ENCODE measurements at regions of chr19 and their contacts with region 1.

Region 1: GRCh38 chr19:49127674-49128544 is 8.6 kb downstream of the PPFIA3 start:
- DNase-seq: no peak
- ATAC-seq: peak; percentile 95
- H3K4me3 ChIP-seq: peak overlapping the region; percentile 39 to 67
- H3K27ac ChIP-seq: peak overlapping the region; percentile 48
- H3K4me1 ChIP-seq: 0 out of 2 replicates have a peak, but pooled peaks cover 3% of the 10 kb centered on the region
- H3K27me3 ChIP-seq: no peaks in the 10 kb centered on the region
- CTCF ChIP-seq: no peak

Region 2: GRCh38 chr19:49042177-49042576 is 85.7 kb before region 1 on chr19:
- CTCF ChIA-PET with region 1: interaction called, 14 read pairs
- POLR2A ChIA-PET with region 1: no interaction called
- in situ Hi-C with region 1: no loop called
- intact Hi-C with region 1: no loop called
- DNase-seq: no peak
- ATAC-seq: no peak
- H3K4me3 ChIP-seq: no peak overlapping the region
- H3K27ac ChIP-seq: no peak overlapping the region
- H3K4me1 ChIP-seq: no peaks in the 10 kb centered on the region
- H3K27me3 ChIP-seq: no peaks in the 10 kb centered on the region
- CTCF ChIP-seq: no peak

Region 3: DNA sequence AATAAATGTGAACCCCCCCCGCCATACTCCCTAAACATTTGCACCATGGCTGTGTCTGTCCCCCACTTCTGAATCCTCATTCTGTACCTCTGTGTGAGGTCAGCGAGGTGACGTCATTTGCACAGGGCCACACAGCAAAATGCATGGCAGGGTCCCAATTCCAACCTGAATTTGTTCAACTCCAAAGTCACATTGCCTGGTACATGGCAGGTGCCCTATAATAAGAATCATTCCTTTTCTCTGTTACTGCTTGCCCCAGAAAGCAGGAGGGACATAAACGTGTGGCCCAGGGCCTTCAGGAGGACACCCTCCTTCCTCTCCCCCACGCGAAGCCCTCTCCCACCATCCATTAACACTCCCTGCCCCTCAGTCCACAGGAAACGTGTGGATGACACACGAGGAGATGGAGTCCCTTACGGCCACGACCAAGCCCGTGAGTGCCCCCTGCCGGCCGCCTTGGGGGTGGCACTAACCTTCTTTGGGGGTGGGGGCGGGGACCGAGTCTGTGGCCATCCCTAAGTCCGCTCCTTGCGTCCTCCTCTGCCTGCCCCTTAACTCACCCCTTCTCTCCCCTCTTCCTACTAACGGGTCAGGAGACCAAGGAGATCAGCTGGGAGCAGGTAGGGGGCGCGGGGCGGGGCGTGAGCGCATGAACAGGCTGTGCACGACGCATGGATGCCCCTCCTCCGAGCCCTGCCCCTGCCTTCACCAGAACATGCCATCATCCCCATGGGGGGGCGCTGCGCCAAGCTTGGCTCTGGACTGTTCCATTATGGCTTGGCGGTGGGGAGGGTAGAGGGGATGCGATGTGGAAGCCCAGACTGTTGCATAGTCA is 17.9 kb after region 1 on chr19:
- CTCF ChIA-PET with region 1: interaction called, 10 read pairs
- POLR2A ChIA-PET with region 1: no interaction called
- in situ Hi-C with region 1: no loop called
- intact Hi-C with region 1: no loop called
- DNase-seq: peak; percentile 42
- ATAC-seq: peak; percentile 35; the same call in 1 of the 2 replicates
- H3K4me3 ChIP-seq: peak overlapping the region; percentile 17 to 27; a peak in 2 of 4 replicates
- H3K27ac ChIP-seq: no peak overlapping the region
- H3K4me1 ChIP-seq: no peaks in the 10 kb centered on the region
- H3K27me3 ChIP-seq: no peaks in the 10 kb centered on the region
- CTCF ChIP-seq: peak; percentile 92

Region 4: DNA sequence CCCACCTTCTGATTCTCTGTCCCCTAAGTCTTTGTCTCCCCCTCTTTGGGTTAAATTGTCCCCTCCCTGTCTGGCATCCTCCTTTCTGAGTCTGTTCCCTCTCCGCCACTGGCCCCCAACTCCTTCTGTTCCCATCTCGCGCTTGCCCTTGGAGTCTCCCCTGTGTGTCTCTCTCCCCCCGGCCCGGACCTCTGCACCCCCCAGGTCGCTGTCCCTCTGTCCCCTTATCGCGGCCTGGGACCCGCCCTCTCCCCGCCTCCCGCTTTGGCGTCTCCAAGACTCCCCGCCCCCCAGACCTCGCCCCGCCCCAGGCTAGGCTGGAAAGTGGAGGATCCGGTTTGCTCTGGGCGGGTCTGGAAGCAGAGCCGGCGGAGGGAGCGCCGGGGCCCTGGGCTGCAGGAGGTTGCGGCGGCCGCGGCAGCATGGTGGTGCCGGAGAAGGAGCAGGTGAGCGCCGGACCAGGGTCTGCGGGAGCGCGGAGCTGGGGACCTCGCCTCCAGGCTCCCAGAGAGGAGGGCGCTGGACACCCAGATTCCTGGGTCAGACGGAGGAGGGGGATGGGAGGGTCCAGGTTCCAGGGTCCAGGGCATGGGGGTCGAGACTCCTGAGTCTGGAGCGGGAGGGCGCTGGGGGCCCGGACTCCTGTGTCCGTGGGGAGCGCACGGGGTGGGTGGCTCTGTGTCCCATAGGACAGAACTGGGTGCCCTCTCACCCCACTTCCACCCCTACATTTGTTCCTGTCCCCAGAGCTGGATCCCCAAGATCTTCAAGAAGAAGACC is 29.7 kb after region 1 on chr19 and contains the start of gene TRPM4:
- CTCF ChIA-PET with region 1: no interaction called
- POLR2A ChIA-PET with region 1: no interaction called
- in situ Hi-C with region 1: no loop called
- intact Hi-C with region 1: no loop called
- DNase-seq: no peak
- ATAC-seq: peak; percentile 96
- H3K4me3 ChIP-seq: peak within 1 kb of the TSS; percentile 74
- H3K27ac ChIP-seq: peak within 1 kb of the TSS; percentile 70
- H3K4me1 ChIP-seq: peaks cover 4% of the 10 kb centered on the region; the same call in 1 of the 2 replicates
- H3K27me3 ChIP-seq: no peaks in the 10 kb centered on the region
- CTCF ChIP-seq: no peak
- total RNA-seq, gene TRPM4: 19.4 TPM

Measured in Panc1 (cell line).